BJ (cell line): ENCODE measurements at regions of chr16 and their contacts with region 1.

Region 1: DNA sequence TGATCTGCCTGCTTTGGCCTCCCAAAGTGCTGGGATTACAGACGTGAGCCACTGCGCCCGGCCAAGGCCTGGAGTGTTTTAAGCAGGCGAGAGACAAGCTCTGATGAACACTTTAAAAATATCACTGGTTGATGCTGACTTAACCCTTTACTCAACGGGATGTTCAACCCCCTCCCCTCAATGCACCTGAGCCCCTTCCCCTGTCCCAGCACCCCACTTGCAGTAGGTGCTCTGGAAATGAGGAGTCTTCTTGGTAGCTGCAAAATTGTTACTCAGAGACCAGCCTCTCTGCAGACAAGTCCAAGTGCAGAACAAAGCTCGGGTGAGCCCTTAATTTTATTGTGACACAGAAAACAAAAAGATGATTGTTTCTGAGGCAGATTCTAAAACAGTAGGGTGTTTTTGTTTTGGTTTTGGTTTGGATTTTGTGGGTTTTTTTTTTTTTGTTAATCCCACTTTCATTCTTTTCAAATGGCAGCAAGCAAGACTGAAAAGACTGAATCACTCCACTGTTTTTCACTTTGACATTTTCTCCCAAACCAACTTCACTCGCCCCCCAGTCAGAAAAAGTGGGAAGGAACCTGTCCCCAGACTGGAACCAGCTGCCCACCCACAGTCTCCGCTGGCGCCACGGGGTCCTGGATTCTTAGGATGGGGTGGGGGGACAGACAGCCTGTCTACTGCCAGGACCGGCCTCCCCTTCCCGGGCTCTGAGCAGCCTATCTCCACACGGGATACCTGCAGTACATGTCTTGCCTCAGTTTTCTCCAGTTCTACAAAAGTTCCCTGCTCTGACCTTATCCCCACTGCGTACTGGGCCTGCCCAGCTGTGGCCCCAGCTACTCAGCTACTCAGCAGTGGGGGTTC is 5.2 kb upstream of the PLLP start:
- DNase-seq: no peak
- H3K4me3 ChIP-seq: no peak overlapping the region
- H3K27me3 ChIP-seq: peaks cover 3% of the 10 kb centered on the region
- CTCF ChIP-seq: no peak

Region 2: GRCh38 chr16:57235128-57236021 is 54.2 kb before region 1 on chr16:
- CTCF ChIA-PET with region 1: no interaction called
- POLR2A ChIA-PET with region 1: no interaction called
- DNase-seq: no peak
- H3K4me3 ChIP-seq: no peak overlapping the region
- H3K27me3 ChIP-seq: no peaks in the 10 kb centered on the region
- CTCF ChIP-seq: no peak

Region 3: GRCh38 chr16:57300387-57301125 is 10.9 kb after region 1 on chr16:
- CTCF ChIA-PET with region 1: interaction called, 10 read pairs
- POLR2A ChIA-PET with region 1: no interaction called
- DNase-seq: peak; percentile 91
- H3K4me3 ChIP-seq: peak overlapping the region; percentile 29
- H3K27me3 ChIP-seq: peaks cover 7% of the 10 kb centered on the region
- CTCF ChIP-seq: peak; percentile 96